Left cardiac atrium (tissue), 4 donors: ENCODE measurements at regions of chr13 and their contacts with region 1.

Region 1: GRCh38 chr13:91375116-91375729 is 23.2 kb upstream of the GPC5 start:
- DNase-seq: no peak
- ATAC-seq: no peak

Region 2: DNA sequence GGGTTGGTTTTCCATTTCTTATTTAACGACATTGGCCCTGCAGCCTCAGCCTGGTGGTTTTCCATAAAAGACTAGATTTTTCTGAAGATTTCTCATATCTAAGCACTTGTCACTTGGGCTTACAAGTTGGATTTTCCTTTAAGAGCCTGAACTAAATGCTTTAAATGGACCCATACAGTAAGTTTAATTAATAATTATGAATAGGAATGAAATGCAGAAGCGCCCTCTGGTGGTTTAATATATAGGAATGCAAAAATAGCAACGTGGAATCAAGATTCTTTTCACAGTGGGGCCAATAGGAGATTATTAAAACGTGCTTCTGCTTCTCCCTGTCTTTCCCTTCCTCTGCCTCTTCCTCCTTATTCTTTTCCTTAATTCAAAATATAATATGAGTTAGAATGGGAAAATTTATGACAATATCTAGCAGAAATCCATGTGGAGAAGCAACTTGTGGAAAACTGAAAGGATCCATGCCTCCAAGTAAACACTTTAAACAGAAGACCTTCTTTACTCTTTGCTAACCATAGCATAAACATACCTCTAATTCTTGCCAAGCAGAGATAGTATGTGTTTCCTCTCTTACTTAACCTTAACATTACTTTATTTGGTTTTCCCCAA is 347.2 kb after region 1 on chr13:
- intact Hi-C with region 1: loop called (anchors 2 to 10 kb)
- DNase-seq: no peak
- ATAC-seq: no peak

Region 3: DNA sequence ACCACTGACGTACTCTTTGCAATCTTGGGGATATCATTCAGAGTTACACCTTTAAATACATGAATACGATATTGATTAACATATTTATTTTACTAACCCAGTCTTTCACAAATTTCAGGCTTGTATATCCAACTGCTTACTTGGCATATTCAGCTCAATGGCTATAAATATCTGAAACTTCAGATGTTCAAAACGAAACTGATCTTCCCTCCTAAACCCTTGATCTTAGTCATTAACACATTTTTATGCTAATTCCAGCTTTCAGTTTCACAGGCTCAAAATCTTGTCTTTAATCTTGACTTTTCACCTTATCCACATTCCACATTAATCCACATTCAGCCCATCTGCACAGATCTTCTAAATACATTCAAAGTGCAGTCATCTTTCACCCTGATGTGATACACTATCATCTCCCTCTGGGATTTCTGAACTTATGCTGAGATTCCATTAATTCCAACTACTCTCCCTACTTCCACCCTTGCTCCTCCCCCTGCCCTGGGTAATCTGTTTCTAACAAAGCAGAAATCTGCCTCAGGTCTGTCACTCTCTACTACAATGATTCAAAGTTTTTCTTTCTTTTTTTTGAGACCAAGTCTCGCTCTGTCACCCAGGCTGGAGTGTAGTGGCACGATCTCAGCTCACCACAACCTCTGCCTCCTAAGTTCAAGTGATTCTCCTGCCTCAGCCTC is 410.4 kb after region 1 on chr13:
- intact Hi-C with region 1: loop called in 1 of 2 experiments (anchors 5 kb)
- DNase-seq: no peak
- ATAC-seq: no peak